Right cardiac atrium (tissue), 5 donors: ENCODE measurements at regions of chr17 and their contacts with region 1.

Region 1: GRCh38 chr17:38485146-38485468 is 56.8 kb downstream of the ARHGAP23 start:
- DNase-seq: no peak
- ATAC-seq: no peak
- H3K4me3 ChIP-seq: no peak overlapping the region
- H3K27ac ChIP-seq: peak overlapping the region; percentile 78
- H3K4me1 ChIP-seq: peaks cover 3% of the 10 kb centered on the region
- H3K27me3 ChIP-seq: no peaks in the 10 kb centered on the region

Region 2: GRCh38 chr17:38421171-38421841 is 63.8 kb before region 1 on chr17:
- intact Hi-C with region 1: loop called in 1 of 4 experiments (anchors 5 kb)
- DNase-seq: peak in 2 of 3 donors; percentile 63 to 75
- ATAC-seq: peak; percentile 27 to 38
- H3K4me3 ChIP-seq: no peak overlapping the region
- H3K27ac ChIP-seq: peak overlapping the region; percentile 73
- H3K4me1 ChIP-seq: peaks cover 8% of the 10 kb centered on the region
- H3K27me3 ChIP-seq: no peaks in the 10 kb centered on the region

Region 3: GRCh38 chr17:38444151-38444550 is 41.0 kb before region 1 on chr17:
- intact Hi-C with region 1: loop called in 1 of 4 experiments (anchors 5 kb)
- DNase-seq: peak; percentile 69 to 91 (median 89)
- ATAC-seq: peak; percentile 69 to 78
- H3K4me3 ChIP-seq: no peak overlapping the region
- H3K27ac ChIP-seq: peak overlapping the region; percentile 12
- H3K4me1 ChIP-seq: peaks cover 7% of the 10 kb centered on the region
- H3K27me3 ChIP-seq: no peaks in the 10 kb centered on the region